ENCODE measurements at regions of chr16 and their contacts with region 1.

Region 1: DNA sequence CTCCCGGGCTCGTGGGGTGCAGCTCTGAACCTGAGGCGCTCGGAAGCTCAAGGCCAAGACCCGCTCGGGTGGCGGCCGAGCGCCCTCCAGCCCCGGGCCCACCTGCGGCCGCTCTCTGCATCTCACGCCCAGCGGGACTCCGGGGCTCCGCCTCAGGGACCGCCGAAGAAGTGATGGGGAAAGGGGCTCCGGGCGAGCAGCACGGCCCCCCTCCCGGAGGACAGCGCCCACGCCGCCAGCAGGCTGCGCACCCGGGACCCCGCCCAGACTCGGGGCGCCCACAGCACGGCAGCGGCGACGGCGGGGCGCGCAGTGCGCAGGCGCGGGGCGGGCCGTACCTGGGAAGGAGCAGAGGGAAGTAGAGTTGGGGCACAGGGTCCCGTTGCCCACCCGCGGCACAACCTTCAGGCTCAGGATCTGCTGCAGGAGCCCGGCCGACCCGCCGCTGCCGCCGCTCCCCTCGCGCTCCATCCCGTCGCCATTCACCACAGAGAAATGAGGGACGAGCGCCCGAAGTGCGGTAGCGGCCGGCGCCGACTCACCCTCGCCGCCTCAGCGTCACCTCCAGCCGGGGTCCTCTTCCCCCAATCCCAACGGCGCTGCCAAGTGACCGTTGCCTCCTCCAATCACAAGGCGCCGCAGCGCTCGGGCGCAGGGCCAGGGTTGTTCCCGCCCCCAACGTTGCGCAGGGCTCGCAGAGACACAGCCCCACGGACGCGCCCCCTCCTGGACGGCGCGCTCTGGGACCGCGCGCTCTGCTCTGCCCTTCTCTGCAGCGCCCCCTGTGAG is at the start of gene TMEM170A:
- DNase-seq: peak; percentile 97

Region 2: GRCh38 chr16:75452464-75453190 is 11.7 kb before region 1 on chr16:
- CTCF ChIA-PET with region 1: interaction called, 11 read pairs
- POLR2A ChIA-PET with region 1: interaction called, 3 read pairs
- DNase-seq: no peak

Region 3: GRCh38 chr16:75519881-75520280 is 55.6 kb after region 1 on chr16:
- CTCF ChIA-PET with region 1: interaction called, 7 read pairs
- POLR2A ChIA-PET with region 1: interaction called, 11 read pairs
- DNase-seq: no peak

Region 4: GRCh38 chr16:75566040-75566810 is 101.9 kb after region 1 on chr16 and contains the start of gene GABARAPL2:
- CTCF ChIA-PET with region 1: interaction called, 11 read pairs
- POLR2A ChIA-PET with region 1: no interaction called
- DNase-seq: peak; percentile 92

Measured in HEK293T (cell line).